Activated CD4-positive, alpha-beta memory T cell treated with anti-CD3 and anti-CD28 coated beads for 36 hours (primary cell): ENCODE measurements at regions of chr10 and their contacts with region 1.

Region 1: DNA sequence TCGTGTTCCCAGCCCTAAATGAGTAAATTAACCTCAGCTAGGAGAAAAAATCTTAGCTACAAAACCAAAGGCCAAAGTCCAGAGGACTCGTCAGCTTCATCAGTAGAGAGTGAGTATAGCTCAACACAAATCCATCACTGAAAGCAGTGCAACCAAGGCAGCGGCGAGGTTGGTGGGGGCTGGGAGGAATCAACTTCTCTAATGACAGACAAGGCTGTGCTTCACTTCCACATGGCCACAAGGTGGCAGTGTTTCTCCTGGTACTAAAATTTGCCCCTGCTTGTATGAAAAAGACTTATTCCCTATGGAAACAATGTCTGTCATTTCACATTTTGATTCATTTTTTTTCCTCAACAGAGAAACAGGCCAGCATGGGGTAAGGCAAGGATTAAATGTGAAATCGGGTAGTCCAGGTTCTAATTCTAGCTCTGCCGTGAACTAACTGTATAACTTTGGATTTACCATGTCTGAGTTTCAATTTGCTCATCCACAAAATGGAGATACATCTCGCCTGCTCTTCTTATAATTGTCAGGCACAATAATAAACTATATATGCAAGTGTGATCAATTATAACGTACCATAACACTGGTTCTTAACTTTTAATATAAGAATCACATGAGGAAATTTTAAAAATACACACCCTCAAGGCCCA is 39.3 kb downstream of the FAS start:
- DNase-seq: peak; percentile 78
- H3K4me3 Mint-ChIP-seq: no peak overlapping the region
- H3K27ac Mint-ChIP-seq: no peak overlapping the region
- H3K4me1 Mint-ChIP-seq: peaks cover 41% of the 10 kb centered on the region
- H3K27me3 Mint-ChIP-seq: no peaks in the 10 kb centered on the region

Region 2: DNA sequence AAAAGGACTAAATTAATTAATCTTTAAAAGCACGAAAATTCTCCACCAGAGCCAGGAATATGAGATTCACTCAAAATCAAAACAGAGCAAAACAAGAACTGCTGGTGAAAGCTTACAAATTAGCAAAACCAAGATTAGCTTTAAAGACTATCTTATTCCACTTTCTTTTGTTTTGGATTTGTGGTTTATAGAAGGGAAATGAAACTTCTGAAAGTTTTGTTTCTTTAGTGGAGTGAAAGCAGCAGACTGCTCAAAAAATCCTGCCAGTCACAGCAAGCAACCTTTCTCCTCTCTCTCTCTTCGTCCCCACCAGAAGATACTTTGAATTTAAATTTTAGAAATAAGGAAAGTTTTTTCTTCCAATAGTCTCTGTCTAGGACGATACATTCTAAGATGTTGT is 85.1 kb before region 1 on chr10:
- CTCF ChIA-PET with region 1: interaction called, 10 read pairs
- POLR2A ChIA-PET with region 1: no interaction called
- intact Hi-C with region 1: no loop called
- DNase-seq: no peak
- H3K4me3 Mint-ChIP-seq: no peak overlapping the region
- H3K27ac Mint-ChIP-seq: no peak overlapping the region
- H3K4me1 Mint-ChIP-seq: peaks cover 14% of the 10 kb centered on the region
- H3K27me3 Mint-ChIP-seq: no peaks in the 10 kb centered on the region

Region 3: DNA sequence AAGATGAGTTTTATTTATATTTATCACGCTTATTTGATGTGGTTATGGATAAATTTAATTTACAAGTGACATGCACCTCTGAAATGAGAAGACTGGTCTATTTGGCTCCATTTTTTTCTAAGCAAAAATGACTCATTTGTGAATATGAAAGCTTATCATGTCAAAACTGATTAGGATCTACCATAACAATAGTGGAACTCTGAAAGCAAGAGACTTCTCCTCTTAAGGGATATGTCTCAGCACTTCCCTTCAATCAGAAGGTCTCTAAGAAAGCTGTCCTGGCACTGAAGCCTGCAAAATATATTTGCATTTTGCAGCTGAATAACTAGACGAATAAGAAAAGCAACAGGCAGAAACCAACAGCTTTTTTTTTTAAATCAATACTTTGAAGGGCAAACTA is 26.6 kb before region 1 on chr10:
- CTCF ChIA-PET with region 1: interaction called, 7 read pairs
- POLR2A ChIA-PET with region 1: no interaction called
- intact Hi-C with region 1: loop called (anchors 1 kb)
- DNase-seq: no peak
- H3K4me3 Mint-ChIP-seq: no peak overlapping the region
- H3K27ac Mint-ChIP-seq: peak overlapping the region; percentile 83
- H3K4me1 Mint-ChIP-seq: peaks cover 66% of the 10 kb centered on the region
- H3K27me3 Mint-ChIP-seq: no peaks in the 10 kb centered on the region

Region 4: DNA sequence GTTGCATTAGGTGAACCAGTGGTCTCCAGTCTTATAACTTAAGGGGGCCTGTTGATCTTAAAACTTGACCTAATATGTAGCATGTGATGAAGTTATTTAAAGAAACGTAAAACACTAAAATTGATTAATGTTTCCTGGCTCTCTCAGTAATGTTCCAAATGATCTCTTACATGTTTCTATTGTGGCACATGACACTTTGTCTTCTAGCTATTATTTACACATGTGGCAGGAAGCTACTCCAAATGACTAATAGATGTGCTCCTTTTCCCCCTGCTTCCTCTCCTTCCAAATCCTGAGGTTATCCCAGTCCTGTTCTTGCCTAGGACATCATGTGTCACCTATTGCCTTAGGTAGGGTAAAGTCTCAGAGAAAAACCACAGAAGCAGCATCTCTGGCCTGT is 50.0 kb after region 1 on chr10:
- CTCF ChIA-PET with region 1: interaction called, 6 read pairs
- POLR2A ChIA-PET with region 1: no interaction called
- intact Hi-C with region 1: loop called (anchors 1 kb)
- DNase-seq: no peak
- H3K4me3 Mint-ChIP-seq: no peak overlapping the region
- H3K27ac Mint-ChIP-seq: no peak overlapping the region
- H3K4me1 Mint-ChIP-seq: peaks cover 22% of the 10 kb centered on the region
- H3K27me3 Mint-ChIP-seq: no peaks in the 10 kb centered on the region

Region 5: GRCh38 chr10:89115876-89116627 is 86.1 kb after region 1 on chr10:
- CTCF ChIA-PET with region 1: interaction called, 13 read pairs
- POLR2A ChIA-PET with region 1: no interaction called
- intact Hi-C with region 1: loop called (anchors 5 kb)
- DNase-seq: no peak
- H3K4me3 Mint-ChIP-seq: no peak overlapping the region
- H3K27ac Mint-ChIP-seq: no peak overlapping the region
- H3K4me1 Mint-ChIP-seq: peaks cover 2% of the 10 kb centered on the region
- H3K27me3 Mint-ChIP-seq: peaks cover 19% of the 10 kb centered on the region

Region 6: DNA sequence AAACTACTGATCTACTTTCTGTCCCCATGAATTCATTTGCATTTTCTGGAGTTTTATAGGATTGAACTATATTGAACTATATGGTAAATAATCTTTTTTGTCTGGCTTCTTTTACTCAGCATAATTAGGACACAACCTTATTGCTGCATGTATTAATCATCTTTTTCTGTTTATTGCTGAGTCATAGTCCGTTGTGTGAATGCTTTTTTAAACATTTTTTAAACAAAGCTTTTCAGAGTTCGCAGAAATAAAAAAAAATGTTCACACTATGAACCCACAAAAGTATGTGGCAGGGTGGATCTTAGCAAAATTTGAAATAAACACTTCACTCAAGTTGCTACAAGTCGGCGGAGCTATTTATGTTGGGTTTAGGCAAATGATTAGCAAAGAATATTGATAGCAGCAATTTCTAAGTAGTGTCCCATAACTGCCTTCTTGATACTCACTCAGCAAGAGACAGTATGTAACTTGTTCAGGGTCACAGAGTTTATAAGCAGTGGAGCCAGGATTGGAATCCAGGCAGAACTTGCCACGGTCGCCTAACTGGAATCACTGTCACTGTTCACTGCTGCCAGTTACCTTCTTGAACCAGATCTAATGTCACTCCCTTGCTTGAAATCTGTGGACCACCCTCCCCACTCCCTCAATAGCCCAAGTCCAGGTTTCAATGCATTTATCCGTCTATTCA is 171.6 kb after region 1 on chr10:
- CTCF ChIA-PET with region 1: interaction called, 114 read pairs
- POLR2A ChIA-PET with region 1: no interaction called
- intact Hi-C with region 1: no loop called
- DNase-seq: no peak
- H3K4me3 Mint-ChIP-seq: no peak overlapping the region
- H3K27ac Mint-ChIP-seq: no peak overlapping the region
- H3K4me1 Mint-ChIP-seq: peaks cover 3% of the 10 kb centered on the region
- H3K27me3 Mint-ChIP-seq: peaks cover 14% of the 10 kb centered on the region

Region 7: DNA sequence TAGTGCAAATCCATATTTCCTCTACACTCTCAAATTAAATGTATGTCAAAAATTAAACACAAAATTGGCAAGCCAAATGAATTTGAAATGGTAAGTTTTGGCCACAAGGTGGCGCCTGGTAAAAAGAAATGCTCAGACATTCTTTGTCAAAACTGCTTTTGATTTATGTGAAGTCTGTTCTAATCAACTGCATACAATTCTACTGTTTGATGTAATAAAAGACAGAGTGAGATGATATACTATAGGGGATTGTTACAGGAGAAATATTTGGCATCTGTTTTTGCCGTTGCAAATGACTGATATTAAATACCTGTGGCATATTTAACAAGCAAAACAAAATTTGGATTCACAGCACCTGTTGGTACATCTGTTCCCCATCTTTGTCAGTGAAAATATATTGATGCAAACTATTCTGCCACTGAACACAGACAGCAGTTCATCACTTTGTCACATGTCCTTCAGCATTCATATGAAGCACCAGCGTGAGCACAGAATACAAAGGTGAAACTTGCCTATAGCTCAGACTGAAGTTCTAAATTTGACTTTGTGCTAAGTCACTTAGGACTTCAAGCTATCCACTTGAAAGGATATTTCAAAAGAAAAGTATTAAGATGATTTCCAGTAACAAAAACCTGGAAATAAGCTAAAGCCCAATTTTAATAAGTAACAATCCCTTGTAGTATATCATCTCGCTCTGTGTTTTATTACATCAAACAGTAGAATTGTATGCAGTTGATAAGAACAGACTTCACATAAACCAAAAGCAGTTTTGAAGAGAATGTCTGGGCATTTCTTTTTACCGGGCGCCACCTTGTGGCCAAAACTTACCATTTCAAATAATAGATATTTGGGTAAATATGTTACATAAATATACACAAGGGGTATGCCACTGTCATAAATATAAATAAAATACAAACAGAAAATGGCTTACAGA is 187.4 kb after region 1 on chr10:
- CTCF ChIA-PET with region 1: interaction called, 151 read pairs
- POLR2A ChIA-PET with region 1: no interaction called
- intact Hi-C with region 1: loop called (anchors 1 kb)
- DNase-seq: peak; percentile 70
- H3K4me3 Mint-ChIP-seq: no peak overlapping the region
- H3K27ac Mint-ChIP-seq: no peak overlapping the region
- H3K4me1 Mint-ChIP-seq: peaks cover 9% of the 10 kb centered on the region
- H3K27me3 Mint-ChIP-seq: no peaks in the 10 kb centered on the region